Lower leg skin (tissue), 4 donors: ENCODE measurements at regions of chr19 and their contacts with region 1.

Region 1: DNA sequence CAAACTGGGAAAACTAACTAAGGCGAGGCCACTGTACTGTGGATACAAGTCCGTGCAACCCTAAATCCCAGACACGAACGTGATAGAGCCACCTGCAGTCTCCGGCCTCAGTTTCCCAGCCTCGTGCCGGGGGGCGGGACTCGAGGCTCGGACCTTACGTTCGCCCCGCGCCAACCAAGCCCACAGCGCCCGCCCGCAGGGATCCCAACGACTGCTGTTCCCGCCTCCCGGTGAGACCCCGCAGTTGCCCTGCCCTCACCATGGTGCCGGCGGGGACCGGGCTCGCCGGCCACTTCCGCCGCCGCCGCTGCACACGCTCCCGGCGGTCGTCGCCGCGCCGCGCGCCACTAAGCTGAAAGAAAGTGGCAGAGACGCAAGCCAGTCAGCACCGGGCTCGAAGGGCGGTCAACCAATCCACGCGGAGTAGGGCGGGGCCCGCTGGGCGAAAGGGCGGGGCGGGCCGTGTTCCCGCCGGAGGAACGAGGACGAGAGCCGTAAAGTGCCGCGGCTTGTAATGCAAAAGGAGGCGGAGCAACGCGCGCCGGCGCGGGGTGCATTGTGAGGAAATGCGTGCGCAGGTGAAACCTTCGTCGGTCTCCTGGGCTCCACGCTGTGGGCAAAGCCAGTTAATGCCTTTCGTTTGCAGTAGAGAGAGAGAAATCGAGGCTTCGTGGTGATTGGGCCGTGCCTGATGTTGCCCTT is at the start of gene LSM4:
- DNase-seq: peak; percentile 97 to 100
- H3K4me3 ChIP-seq: peak within 1 kb of the TSS; percentile 49
- CTCF ChIP-seq: no peak
- POLR2A ChIP-seq: no peak
- total RNA-seq, gene LSM4: 59.7 to 149 (median 105) TPM

Region 2: GRCh38 chr19:18249834-18250233 is 73.1 kb before region 1 on chr19:
- intact Hi-C with region 1: no loop called
- DNase-seq: no peak
- H3K4me3 ChIP-seq: no peak overlapping the region
- CTCF ChIP-seq: no peak
- POLR2A ChIP-seq: no peak

Region 3: DNA sequence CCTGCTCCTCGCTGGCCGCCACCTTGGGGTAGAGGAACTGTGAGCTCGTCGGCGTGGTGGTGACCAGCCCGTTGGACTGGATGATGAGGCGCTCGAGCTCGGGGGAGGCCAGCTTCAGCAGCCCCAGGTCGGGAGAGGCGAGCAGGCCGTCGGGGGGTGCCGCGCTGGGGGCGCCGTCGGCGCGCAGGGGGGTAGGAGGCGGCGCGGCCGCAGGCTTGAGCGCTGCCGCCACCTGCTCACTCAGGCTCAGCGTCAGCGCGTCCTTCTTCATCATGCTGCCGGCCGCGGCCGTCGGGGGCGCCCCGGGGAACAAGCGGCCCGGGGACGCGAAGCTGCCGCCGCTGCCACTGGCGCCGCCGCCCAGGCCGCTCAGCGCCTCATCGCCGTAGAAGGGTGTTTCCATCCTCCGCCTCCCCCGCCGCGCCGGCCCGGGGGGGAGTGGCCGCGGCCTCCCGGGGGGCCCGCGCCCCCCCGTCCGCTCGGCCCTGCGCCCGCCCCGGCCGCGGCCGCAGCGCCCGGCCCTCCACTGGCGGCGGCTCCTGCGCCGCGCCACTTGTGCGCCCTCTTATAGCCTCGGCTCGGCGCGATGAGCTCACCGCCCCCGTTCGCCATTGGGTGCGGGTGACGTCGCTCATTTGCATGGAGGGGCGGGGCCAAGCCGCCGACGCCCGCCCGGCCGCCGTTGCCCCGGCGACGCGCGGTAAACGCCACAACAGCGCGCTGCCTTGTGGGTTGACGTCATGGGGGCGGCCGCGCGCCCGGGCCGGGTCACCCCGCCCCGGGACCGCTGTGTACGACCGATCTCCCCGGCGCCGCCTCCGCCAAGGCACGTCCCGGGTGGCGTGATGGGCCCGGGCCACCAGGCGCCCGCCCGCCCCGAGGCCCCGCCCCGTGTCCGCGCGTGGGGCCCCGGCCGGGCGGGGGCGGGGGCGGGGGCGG is 41.6 kb before region 1 on chr19 and contains the start of gene JUND:
- intact Hi-C with region 1: loop called (anchors 2 kb)
- DNase-seq: peak; percentile 96 to 99
- H3K4me3 ChIP-seq: peak within 1 kb of the TSS; percentile 100
- CTCF ChIP-seq: no peak
- POLR2A ChIP-seq: peak in 1 of 2 donors; percentile 82
- total RNA-seq, gene JUND: 337 to 886 (median 413) TPM